ENCODE measurements at regions of chr5 and their contacts with region 1.

Region 1: GRCh38 chr5:149114403-149115312 is 26.6 kb upstream of the ABLIM3 start:
- DNase-seq: peak; percentile 88
- H3K4me3 ChIP-seq: no peak overlapping the region
- H3K27ac ChIP-seq: no peak overlapping the region
- H3K4me1 ChIP-seq: peaks cover 6% of the 10 kb centered on the region
- H3K27me3 ChIP-seq: no peaks in the 10 kb centered on the region
- CTCF ChIP-seq: peak; percentile 83 to 88
- POLR2A ChIP-seq: no peak

Region 2: DNA sequence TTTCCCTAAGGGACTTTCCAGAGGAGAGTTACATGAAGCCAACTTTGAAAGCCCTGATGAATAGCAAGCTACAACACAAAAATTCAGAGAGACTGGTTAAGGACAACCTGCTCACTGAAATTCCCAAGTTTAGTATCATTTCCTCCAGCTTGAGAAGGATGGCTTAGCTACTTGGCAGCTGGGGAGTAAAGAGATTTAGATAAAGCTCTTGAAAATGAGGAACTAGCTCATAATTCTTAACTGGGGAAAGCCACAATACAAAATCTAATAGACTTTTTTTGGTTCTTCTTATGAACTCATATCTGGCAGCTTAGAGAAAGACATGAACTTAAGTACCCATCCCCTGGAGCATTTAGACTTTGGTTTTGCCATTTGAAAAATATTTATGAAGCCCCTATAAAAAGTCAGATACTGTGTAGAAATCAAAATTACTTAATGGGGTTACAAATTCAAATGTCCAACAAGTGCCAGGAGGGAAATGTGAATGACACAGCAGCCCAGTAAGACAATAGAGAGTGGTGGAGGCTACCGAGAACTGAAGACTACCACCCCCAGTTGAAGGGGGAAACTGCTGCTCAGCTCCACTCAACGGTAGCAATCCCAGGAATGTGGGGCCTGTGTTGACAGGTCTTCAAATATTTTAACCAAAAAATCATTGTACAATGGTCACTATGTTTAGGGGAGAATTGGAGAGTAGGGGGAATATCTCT is 367.7 kb before region 1 on chr5:
- CTCF ChIA-PET with region 1: interaction called, 165 read pairs
- POLR2A ChIA-PET with region 1: no interaction called
- dilution Hi-C with region 1: loop called (anchors 25 kb)
- intact Hi-C with region 1: no loop called
- DNase-seq: peak; percentile 45
- H3K4me3 ChIP-seq: no peak overlapping the region
- H3K27ac ChIP-seq: no peak overlapping the region
- H3K4me1 ChIP-seq: no peaks in the 10 kb centered on the region
- H3K27me3 ChIP-seq: no peaks in the 10 kb centered on the region
- CTCF ChIP-seq: no peak
- POLR2A ChIP-seq: no peak

Region 3: DNA sequence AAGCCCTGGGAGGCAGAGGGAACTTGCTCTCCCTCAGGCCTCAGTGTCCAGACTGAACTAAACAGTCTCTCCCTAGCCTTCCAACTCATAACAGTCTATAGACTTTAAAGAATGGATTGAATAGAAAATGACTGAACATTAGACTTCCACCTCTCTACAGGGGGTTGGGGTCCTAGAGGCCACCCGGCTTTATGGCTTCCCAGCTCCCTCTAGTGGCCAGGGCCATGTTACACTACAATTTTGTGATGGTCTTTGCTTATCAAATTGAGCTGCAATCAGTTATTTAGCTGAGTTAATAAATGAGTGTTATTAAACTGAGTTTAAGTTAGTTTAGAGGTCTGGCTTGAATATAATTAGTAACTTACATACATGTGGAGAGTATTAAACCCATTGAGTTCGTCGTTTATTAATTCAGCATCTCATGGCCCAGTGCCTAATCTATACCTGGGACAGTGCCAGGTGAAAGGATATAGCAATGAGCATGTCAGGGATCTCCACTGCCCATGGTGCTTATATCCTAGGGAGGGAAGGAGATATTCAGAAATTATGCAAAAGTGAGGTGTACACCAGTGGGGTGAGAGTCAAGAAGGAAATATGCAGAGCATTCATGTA is 157.0 kb before region 1 on chr5:
- CTCF ChIA-PET with region 1: interaction called, 92 read pairs
- POLR2A ChIA-PET with region 1: no interaction called
- dilution Hi-C with region 1: no loop called
- intact Hi-C with region 1: loop called (anchors 1 kb)
- DNase-seq: peak; percentile 66
- H3K4me3 ChIP-seq: no peak overlapping the region
- H3K27ac ChIP-seq: no peak overlapping the region
- H3K4me1 ChIP-seq: no peaks in the 10 kb centered on the region
- H3K27me3 ChIP-seq: no peaks in the 10 kb centered on the region
- CTCF ChIP-seq: peak; percentile 77 to 88
- POLR2A ChIP-seq: no peak

Region 4: DNA sequence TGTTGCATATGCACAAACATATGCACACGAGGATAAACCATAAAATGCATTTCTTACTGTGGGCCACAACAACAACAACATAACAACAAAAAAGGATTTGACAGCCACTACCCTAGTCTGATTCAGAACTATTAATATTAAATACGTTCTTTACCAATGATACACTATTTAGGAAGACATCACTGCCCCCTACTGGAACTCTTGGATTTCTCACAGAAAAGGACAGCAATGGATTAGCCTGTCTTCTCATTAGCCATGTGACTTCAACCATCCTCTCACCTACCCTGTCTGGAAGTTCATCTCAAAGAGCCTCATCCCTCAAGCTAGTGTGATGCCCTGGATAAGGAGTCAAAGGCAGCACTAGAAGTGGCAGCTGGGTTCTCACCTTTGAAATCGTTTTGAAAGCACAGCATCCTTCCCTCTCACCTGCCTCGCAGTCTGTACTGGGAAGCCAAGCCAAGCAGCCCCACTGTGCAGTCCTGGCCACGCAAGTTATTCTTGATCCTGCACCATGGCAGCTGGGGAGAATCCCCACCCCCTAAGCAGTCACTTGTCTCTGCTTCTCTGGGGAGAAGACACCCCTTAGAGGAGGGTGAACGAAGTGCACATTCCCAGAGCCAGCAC is 116.4 kb before region 1 on chr5:
- CTCF ChIA-PET with region 1: interaction called, 138 read pairs
- POLR2A ChIA-PET with region 1: no interaction called
- dilution Hi-C with region 1: no loop called
- intact Hi-C with region 1: loop called (anchors 1 kb)
- DNase-seq: peak; percentile 68
- H3K4me3 ChIP-seq: no peak overlapping the region
- H3K27ac ChIP-seq: no peak overlapping the region
- H3K4me1 ChIP-seq: peaks cover 13% of the 10 kb centered on the region
- H3K27me3 ChIP-seq: no peaks in the 10 kb centered on the region
- CTCF ChIP-seq: peak; percentile 54 to 62
- POLR2A ChIP-seq: no peak

Region 5: DNA sequence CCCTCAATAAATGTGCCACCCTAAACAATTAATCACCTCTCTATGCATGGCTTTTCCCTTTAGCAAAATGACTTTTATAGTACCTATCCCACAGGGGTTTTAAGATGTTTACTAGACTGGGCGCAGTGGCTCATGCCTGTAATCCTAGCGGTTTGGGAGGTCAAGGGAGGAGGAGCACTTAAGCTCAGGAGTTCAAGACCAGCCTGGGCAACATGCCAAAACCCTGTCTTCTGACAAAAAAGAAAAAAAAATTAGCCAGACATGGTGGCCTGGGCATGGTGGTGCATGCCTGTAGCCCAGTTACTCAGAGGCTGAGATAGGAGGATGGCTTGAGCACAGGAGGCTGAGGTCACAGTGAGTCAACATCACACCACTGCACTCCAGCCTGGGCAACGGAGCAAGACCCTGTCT is 65.3 kb before region 1 on chr5:
- CTCF ChIA-PET with region 1: interaction called, 10 read pairs
- POLR2A ChIA-PET with region 1: no interaction called
- dilution Hi-C with region 1: no loop called
- intact Hi-C with region 1: no loop called
- DNase-seq: no peak
- H3K4me3 ChIP-seq: no peak overlapping the region
- H3K27ac ChIP-seq: no peak overlapping the region
- H3K4me1 ChIP-seq: peaks cover 12% of the 10 kb centered on the region
- H3K27me3 ChIP-seq: no peaks in the 10 kb centered on the region
- CTCF ChIP-seq: no peak
- POLR2A ChIP-seq: no peak

Region 6: DNA sequence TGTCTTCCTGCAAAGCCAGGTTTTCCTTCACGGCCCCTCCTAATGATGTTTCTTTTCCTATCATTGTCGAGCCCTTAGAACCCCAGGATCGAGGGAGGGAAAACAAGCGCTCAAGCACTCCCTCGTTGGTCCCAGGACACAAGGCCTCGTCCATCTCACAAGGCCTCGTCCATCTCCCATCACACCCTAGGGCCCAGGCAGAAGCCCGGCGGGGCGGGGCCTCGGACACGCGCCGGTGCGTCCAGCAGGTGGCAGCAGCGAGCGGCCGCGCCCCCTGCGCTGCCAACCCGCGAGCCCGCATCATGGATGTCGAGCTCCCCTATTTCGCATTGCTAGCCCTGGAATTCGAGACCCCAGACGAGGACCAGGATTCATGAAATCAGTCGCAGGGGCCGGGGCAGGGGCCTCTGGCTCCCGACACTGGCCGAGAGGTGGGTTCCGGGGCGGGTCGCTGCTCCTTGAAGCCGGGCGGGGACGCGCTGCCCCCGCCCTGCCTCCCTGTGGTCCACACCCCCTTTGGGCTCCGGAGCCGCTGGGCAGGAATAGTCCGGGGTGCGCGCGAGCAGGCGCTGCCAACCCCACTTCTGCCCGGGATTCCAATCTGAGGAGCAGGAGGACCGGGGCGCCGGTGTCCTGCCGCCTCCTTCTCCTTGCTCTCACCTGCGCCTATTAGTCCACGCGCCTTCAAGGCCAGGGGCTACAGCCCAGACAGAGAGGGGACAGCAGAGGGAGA is 26.7 kb after region 1 on chr5 and contains the start of gene ABLIM3:
- CTCF ChIA-PET with region 1: interaction called, 13 read pairs
- POLR2A ChIA-PET with region 1: no interaction called
- dilution Hi-C with region 1: no loop called
- intact Hi-C with region 1: no loop called
- DNase-seq: peak; percentile 76
- H3K4me3 ChIP-seq: peak within 1 kb of the TSS; percentile 61 to 82 (median 66)
- H3K27ac ChIP-seq: peak within 1 kb of the TSS; percentile 65
- H3K4me1 ChIP-seq: peaks cover 33% of the 10 kb centered on the region
- H3K27me3 ChIP-seq: no peaks in the 10 kb centered on the region
- CTCF ChIP-seq: peak; percentile 89 to 97
- POLR2A ChIP-seq: no peak
- total RNA-seq, gene ABLIM3: 25.7 and 42.1 TPM in 2 replicates